ENCODE measurements at regions of chr20 and their contacts with region 1.

Region 1: GRCh38 chr20:3854462-3854871 is 7.8 kb downstream of the MAVS start:
- DNase-seq: no peak
- H3K4me3 ChIP-seq: no peak overlapping the region
- H3K27ac ChIP-seq: no peak overlapping the region
- H3K4me1 ChIP-seq: no peaks in the 10 kb centered on the region
- H3K27me3 ChIP-seq: no peaks in the 10 kb centered on the region
- CTCF ChIP-seq: no peak
- POLR2A ChIP-seq: no peak

Region 2: GRCh38 chr20:3753098-3753980 is 101.1 kb before region 1 on chr20:
- CTCF ChIA-PET with region 1: interaction called, 8 read pairs
- POLR2A ChIA-PET with region 1: no interaction called
- dilution Hi-C with region 1: no loop called
- intact Hi-C with region 1: loop called (anchors 1 kb)
- DNase-seq: peak; percentile 66
- H3K4me3 ChIP-seq: no peak overlapping the region
- H3K27ac ChIP-seq: no peak overlapping the region
- H3K4me1 ChIP-seq: no peaks in the 10 kb centered on the region
- H3K27me3 ChIP-seq: no peaks in the 10 kb centered on the region
- CTCF ChIP-seq: peak; percentile 79 to 89
- POLR2A ChIP-seq: peak; percentile 55

Region 3: GRCh38 chr20:3786665-3787323 is 67.7 kb before region 1 on chr20 and contains the start of gene CENPB:
- CTCF ChIA-PET with region 1: interaction called, 70 read pairs
- POLR2A ChIA-PET with region 1: interaction called, 4 read pairs
- dilution Hi-C with region 1: no loop called
- intact Hi-C with region 1: loop called (anchors 1 kb)
- DNase-seq: peak; percentile 83
- H3K4me3 ChIP-seq: peak within 1 kb of the TSS; percentile 30 to 62 (median 58)
- H3K27ac ChIP-seq: peak within 1 kb of the TSS; percentile 0
- H3K4me1 ChIP-seq: peaks cover 18% of the 10 kb centered on the region
- H3K27me3 ChIP-seq: no peaks in the 10 kb centered on the region
- CTCF ChIP-seq: peak; percentile 56 to 62
- POLR2A ChIP-seq: no peak
- total RNA-seq, gene CENPB: 82.2 and 90.3 TPM in 2 replicates

Region 4: GRCh38 chr20:3866466-3866916 is 12.0 kb after region 1 on chr20:
- CTCF ChIA-PET with region 1: interaction called, 12 read pairs
- POLR2A ChIA-PET with region 1: no interaction called
- dilution Hi-C with region 1: no loop called
- intact Hi-C with region 1: no loop called
- DNase-seq: no peak
- H3K4me3 ChIP-seq: no peak overlapping the region
- H3K27ac ChIP-seq: no peak overlapping the region
- H3K4me1 ChIP-seq: no peaks in the 10 kb centered on the region
- H3K27me3 ChIP-seq: no peaks in the 10 kb centered on the region
- CTCF ChIP-seq: no peak
- POLR2A ChIP-seq: no peak

Region 5: DNA sequence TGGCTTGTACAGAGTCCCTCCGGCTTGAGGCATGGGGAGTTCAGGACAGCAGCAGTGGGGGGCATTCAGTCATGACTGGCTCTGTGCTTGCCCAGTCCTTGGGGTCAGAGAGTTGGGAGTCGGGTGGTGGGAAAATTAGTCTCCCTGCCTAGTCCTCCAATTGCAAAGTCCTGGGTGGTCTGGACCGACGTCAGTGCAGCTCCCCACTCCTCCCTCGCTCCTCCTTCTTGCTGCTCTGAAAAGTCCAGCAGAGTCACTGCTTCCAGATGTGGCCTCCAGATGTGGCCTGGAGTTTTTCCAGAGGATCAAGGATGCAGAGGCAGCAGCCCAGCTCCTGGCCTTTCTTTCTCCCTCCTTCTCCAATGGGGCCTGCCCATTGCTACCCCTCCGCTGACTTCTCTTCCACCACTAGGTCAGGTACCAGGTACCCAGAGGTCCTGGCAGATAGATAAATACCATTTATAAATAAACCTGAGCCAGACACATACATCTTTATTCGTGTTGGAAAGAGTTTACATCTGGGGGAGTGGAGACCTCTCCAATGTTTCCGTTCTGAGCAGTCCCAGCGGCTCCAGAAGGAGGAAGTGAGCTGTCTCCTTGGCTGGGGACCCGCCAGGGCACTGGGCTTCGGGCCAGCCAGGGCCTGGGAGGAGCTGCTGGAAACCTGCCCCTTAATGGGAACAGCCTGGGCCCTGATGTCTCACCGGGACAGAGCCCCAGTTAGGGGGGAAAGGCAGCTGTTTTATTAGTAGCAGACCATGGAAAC is 209.9 kb after region 1 on chr20:
- CTCF ChIA-PET with region 1: no interaction called
- POLR2A ChIA-PET with region 1: no interaction called
- dilution Hi-C with region 1: no loop called
- intact Hi-C with region 1: no loop called
- DNase-seq: peak; percentile 96
- H3K4me3 ChIP-seq: peak overlapping the region in 1 of 3 experiments; percentile 8
- H3K27ac ChIP-seq: peak overlapping the region; percentile 90
- H3K4me1 ChIP-seq: peaks cover 41% of the 10 kb centered on the region
- H3K27me3 ChIP-seq: no peaks in the 10 kb centered on the region
- CTCF ChIP-seq: no peak
- POLR2A ChIP-seq: no peak